Natural killer cell (primary cell): ENCODE measurements at regions of chr2 and their contacts with region 1.

Region 1: GRCh38 chr2:175187378-175187777 is 5.9 kb upstream of the ATP5MC3 start:
- DNase-seq: peak in 1 of 2 donors; percentile 41
- ATAC-seq: peak; percentile 29 to 52 (median 37)
- H3K4me3 ChIP-seq: no peak overlapping the region
- H3K4me3 Mint-ChIP-seq: no peak overlapping the region
- H3K27ac ChIP-seq: no peak overlapping the region
- H3K27ac Mint-ChIP-seq: no peak overlapping the region
- H3K4me1 ChIP-seq: no peaks in the 10 kb centered on the region
- H3K4me1 Mint-ChIP-seq: peaks cover 0 to under 1% of the 10 kb centered on the region in 2 donors
- H3K27me3 ChIP-seq: no peaks in the 10 kb centered on the region
- H3K27me3 Mint-ChIP-seq: peaks cover 13 to 42% of the 10 kb centered on the region in 2 donors
- CTCF ChIP-seq: peak; percentile 14

Region 2: DNA sequence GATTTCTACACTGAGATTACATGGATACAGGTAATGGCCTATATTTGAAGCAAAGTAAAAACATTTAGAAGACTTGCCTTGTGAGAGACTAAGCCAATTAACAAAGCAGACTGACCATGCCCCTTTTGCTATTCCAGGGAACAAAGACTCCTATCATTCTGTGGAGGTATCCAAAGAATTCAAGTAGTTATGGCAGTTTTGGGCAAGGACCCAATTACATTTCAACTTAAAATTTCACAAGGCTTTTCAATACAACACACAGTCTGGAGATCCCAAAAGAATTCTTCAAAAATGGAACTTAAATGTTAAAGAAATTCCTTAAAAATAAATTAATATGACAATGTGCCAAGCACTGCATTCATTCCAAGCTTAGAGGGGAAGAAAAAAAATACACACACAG is 313.9 kb before region 1 on chr2:
- intact Hi-C with region 1: no loop called
- DNase-seq: no peak
- ATAC-seq: no peak
- H3K4me3 ChIP-seq: no peak overlapping the region
- H3K4me3 Mint-ChIP-seq: no peak overlapping the region
- H3K27ac ChIP-seq: no peak overlapping the region
- H3K27ac Mint-ChIP-seq: no peak overlapping the region
- H3K4me1 ChIP-seq: no peaks in the 10 kb centered on the region
- H3K4me1 Mint-ChIP-seq: no peaks in the 10 kb centered on the region
- H3K27me3 ChIP-seq: no peaks in the 10 kb centered on the region
- H3K27me3 Mint-ChIP-seq: peaks cover 4 to 6% of the 10 kb centered on the region in 2 donors
- CTCF ChIP-seq: no peak

Region 3: GRCh38 chr2:175111200-175111657 is 76.1 kb before region 1 on chr2:
- intact Hi-C with region 1: loop called (anchors 5 kb)
- DNase-seq: peak in 1 of 2 donors; percentile 72
- ATAC-seq: peak; percentile 68 to 75 (median 73)
- H3K4me3 ChIP-seq: no peak overlapping the region
- H3K4me3 Mint-ChIP-seq: no peak overlapping the region
- H3K27ac ChIP-seq: no peak overlapping the region
- H3K27ac Mint-ChIP-seq: peak overlapping the region in 1 of 2 donors; percentile 58
- H3K4me1 ChIP-seq: no peaks in the 10 kb centered on the region
- H3K4me1 Mint-ChIP-seq: no peaks in the 10 kb centered on the region
- H3K27me3 ChIP-seq: no peaks in the 10 kb centered on the region
- H3K27me3 Mint-ChIP-seq: no peaks in the 10 kb centered on the region
- CTCF ChIP-seq: peak; percentile 72